Activated CD8-positive, alpha-beta T cell treated with anti-CD3 and anti-CD28 coated beads for 36 hours (primary cell): ENCODE measurements at regions of chr18 and their contacts with region 1.

Region 1: GRCh38 chr18:22650247-22650646 is 232.5 kb upstream of the CTAGE1 start:
- DNase-seq: no peak
- ATAC-seq: no peak
- H3K4me3 Mint-ChIP-seq: no peak overlapping the region
- H3K27ac Mint-ChIP-seq: no peak overlapping the region
- H3K4me1 Mint-ChIP-seq: no peaks in the 10 kb centered on the region
- H3K27me3 Mint-ChIP-seq: peaks cover 3% of the 10 kb centered on the region
- CTCF ChIP-seq: no peak

Region 2: DNA sequence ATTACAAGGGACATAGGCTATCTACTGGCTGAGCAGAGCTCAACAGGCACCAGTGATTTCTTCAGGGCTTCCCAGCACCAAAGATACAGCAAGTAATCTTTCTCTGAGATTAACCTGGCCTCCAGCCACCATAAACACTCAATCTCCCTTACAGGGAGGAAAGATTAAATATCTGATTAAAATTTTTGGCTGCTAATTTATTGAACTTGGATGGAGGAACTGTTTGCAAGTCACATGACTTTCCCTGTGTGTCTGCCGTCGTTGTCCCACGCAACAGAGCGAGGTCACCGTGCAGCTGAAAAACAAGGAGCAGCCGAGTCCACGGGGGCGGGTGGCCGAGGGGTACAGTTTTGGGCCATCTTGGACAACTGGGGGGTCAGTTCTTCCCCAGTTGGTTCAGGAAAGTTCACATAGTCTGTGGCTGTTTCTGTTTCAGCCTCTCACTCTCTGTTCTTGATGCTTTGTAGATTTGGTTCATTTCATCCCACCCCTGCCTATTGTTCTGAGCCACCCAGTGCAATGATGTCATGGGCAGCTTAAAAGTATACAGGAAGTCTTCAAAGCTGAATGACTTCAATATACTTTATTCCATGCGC is 45.8 kb before region 1 on chr18:
- CTCF ChIA-PET with region 1: no interaction called
- POLR2A ChIA-PET with region 1: no interaction called
- intact Hi-C with region 1: loop called (anchors 5 kb)
- DNase-seq: no peak
- ATAC-seq: no peak
- H3K4me3 Mint-ChIP-seq: no peak overlapping the region
- H3K27ac Mint-ChIP-seq: no peak overlapping the region
- H3K4me1 Mint-ChIP-seq: no peaks in the 10 kb centered on the region
- H3K27me3 Mint-ChIP-seq: peaks cover 9% of the 10 kb centered on the region
- CTCF ChIP-seq: no peak